ENCODE measurements at regions of chr17 and their contacts with region 1.

Region 1: GRCh38 chr17:21511363-21512198 is 135.4 kb downstream of the KCNJ12 start:
- DNase-seq: peak; percentile 85 to 94 (median 93)
- ATAC-seq: peak; percentile 96
- H3K4me3 ChIP-seq: peak overlapping the region; percentile 67
- H3K27ac ChIP-seq: peak overlapping the region; percentile 55
- H3K4me1 ChIP-seq: no peaks in the 10 kb centered on the region
- H3K27me3 ChIP-seq: no peaks in the 10 kb centered on the region

Region 2: DNA sequence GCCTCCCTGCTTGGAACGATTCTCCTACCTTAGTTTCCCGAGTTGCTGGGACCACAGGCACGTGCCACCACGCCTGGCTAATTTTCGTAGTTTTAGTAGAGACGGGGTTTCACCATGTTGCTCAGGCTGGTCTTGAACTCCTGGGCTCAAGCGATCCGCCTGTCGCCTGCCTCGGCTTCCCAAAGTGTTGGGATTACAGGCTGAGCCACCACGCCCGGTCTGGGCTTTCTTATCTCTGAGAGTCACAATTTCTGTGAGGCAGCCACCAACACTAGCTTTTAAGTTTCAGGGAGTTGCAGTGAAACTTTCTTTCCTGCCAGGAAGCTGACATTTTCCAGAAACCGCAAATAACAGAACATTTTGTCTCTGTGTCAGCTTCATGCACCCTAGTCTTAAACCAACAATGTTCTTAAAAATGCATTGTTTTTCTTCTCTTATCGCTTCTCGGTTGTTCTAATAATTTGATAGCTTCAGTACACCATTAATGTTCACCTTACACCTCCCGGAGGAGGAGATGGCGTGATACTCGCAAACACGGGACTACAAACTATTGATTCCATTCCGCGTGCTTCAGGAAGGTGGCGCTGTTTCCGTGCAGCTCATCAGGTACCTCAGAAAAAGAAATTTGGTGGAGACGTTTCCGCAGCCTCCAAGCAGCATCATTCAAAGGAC is 392.2 kb before region 1 on chr17:
- intact Hi-C with region 1: loop called in 2 of 4 experiments (anchors 10 kb)
- DNase-seq: peak; percentile 73 to 83 (median 79)
- ATAC-seq: peak; percentile 76 to 87
- H3K4me3 ChIP-seq: no peak overlapping the region
- H3K27ac ChIP-seq: no peak overlapping the region
- H3K4me1 ChIP-seq: no peaks in the 10 kb centered on the region
- H3K27me3 ChIP-seq: no peaks in the 10 kb centered on the region

Region 3: DNA sequence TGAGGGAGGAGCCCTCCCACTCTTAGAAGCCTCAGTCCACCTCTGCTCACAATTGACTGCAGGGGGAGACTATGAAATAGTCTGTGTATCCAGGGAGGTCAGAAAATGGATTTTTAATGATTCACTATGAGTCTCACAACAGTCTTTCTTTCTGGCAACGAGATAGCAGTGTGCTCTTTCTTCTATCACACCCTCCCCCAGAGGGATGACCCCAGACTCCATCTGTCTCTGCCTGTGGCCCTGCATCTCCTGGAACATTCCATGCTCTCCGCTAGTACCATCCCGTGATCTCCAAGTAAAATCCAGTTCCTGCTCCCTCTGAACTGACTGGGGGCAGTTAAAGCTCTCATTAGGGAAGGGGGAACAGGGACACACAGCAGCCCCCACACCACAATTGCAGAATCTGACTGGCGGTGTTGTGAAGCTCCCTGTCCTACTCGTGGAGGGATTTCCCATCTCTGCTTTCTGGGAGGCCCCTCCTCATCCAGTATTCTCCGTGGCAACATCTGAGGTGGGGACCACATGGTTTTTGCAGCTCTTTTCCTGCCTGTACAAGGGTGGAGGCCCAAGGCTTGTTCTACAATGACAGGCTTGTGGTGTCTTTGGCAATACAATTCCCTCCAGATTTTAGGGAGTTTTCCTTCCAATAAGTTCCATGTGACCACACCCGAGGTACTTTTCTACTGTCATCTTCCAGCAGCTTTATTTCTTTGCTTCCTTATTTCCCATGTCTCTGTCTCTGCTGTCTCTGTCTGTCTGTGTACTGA is 277.8 kb before region 1 on chr17:
- intact Hi-C with region 1: no loop called
- DNase-seq: no peak
- ATAC-seq: peak; percentile 52 to 55
- H3K4me3 ChIP-seq: no peak overlapping the region
- H3K27ac ChIP-seq: no peak overlapping the region
- H3K4me1 ChIP-seq: no peaks in the 10 kb centered on the region
- H3K27me3 ChIP-seq: no peaks in the 10 kb centered on the region

Region 4: GRCh38 chr17:21284319-21285163 is 227.0 kb before region 1 on chr17 and contains the start of gene MAP2K3:
- intact Hi-C with region 1: loop called in 1 of 4 experiments (anchors 10 kb)
- DNase-seq: peak; percentile 99 to 100 (median 100)
- ATAC-seq: peak; percentile 84 to 91
- H3K4me3 ChIP-seq: peak within 1 kb of the TSS; percentile 62
- H3K27ac ChIP-seq: peak within 1 kb of the TSS; percentile 91
- H3K4me1 ChIP-seq: peaks cover 11% of the 10 kb centered on the region
- H3K27me3 ChIP-seq: no peaks in the 10 kb centered on the region
- total RNA-seq, gene MAP2K3: 29.6 to 61.2 (median 41.1) TPM

Region 5: GRCh38 chr17:21358707-21359482 is 152.7 kb before region 1 on chr17:
- intact Hi-C with region 1: no loop called
- DNase-seq: peak; percentile 68 to 80 (median 72)
- ATAC-seq: peak; percentile 93 to 95
- H3K4me3 ChIP-seq: no peak overlapping the region
- H3K27ac ChIP-seq: peak overlapping the region; percentile 78
- H3K4me1 ChIP-seq: peaks cover 14% of the 10 kb centered on the region
- H3K27me3 ChIP-seq: no peaks in the 10 kb centered on the region

Region 6: GRCh38 chr17:21457051-21458026 is 54.2 kb before region 1 on chr17:
- intact Hi-C with region 1: loop called (anchors 2 to 10 kb)
- DNase-seq: peak; percentile 91 to 97 (median 96)
- ATAC-seq: peak; percentile 91 to 93
- H3K4me3 ChIP-seq: no peak overlapping the region
- H3K27ac ChIP-seq: no peak overlapping the region
- H3K4me1 ChIP-seq: no peaks in the 10 kb centered on the region
- H3K27me3 ChIP-seq: no peaks in the 10 kb centered on the region